Left cardiac atrium (tissue), 4 donors: ENCODE measurements at regions of chr20 and their contacts with region 1.

Region 1: DNA sequence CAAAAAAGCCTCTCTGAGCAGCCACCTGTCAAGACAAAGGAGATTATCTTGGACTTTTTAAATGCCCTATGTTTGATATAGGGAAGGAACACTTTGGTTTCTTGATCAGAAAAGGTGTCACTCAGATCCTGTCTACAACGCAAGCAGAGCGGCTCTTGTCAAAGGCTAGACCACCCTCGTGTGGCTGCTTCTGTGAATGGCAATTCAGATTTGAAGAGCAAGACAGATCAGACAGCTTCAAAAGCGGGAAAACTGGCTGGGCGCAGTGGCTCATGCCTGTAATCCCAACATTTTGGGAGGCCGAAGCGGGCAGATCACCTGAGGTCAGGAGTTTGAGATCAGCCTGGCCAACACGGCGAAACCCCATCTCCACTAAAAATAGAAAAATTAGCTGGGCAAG is 10.1 kb upstream of the NXT1 start:
- DNase-seq: peak; percentile 77
- ATAC-seq: peak; percentile 81

Region 2: GRCh38 chr20:21490095-21490494 is 1850.4 kb before region 1 on chr20:
- intact Hi-C with region 1: no loop called
- DNase-seq: no peak
- ATAC-seq: no peak

Region 3: DNA sequence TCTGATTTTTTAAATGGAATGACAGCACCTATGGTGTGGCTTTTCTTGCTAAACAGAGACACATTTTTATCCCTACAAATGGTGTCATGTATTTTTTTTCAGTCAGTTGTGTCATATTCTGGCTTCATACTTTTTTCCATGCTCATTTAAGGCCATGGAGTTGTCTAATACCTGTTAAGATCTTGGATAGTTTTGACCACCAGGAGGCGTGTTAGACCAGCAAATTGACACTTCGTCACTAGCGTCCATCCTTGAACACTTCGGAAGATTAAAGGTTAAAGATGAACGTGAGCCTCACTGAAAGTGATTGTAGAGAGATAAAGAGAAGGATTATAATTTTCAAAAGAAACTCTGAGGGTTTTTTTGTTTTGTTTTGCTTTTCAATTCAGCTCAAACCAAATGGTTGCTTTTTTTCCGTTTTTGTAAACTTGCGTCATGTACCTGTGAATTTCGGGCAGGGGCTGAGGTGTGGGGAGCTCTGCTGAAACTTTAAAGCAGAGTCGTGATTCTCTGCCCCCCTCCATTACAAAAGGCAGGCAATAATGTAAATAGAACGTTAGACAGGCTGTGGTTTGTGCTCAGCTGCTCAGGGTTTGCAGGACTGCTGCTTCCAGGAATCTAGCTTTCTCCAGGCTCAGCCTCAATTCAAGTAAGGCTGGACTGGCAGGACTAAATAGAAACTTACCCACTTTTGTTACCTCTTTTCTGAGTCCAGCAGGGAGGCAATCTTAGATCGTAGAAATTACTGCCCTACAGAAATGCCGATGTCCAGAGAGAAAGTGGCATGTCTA is 1001.2 kb before region 1 on chr20:
- intact Hi-C with region 1: loop called in 1 of 2 experiments (anchors 5 kb)
- DNase-seq: no peak
- ATAC-seq: peak; percentile 41 to 82

Region 4: GRCh38 chr20:22691369-22692118 is 649.0 kb before region 1 on chr20:
- intact Hi-C with region 1: loop called (anchors 2 to 5 kb)
- DNase-seq: peak; percentile 82
- ATAC-seq: peak; percentile 92 to 93

Region 5: GRCh38 chr20:23187751-23188150 is 152.8 kb before region 1 on chr20:
- intact Hi-C with region 1: no loop called
- DNase-seq: peak; percentile 38
- ATAC-seq: peak; percentile 57 to 92

Region 6: GRCh38 chr20:23265226-23265625 is 75.3 kb before region 1 on chr20:
- intact Hi-C with region 1: loop called in 1 of 2 experiments (anchors 5 kb)
- DNase-seq: no peak
- ATAC-seq: no peak